ENCODE measurements at regions of chr7 and their contacts with region 1.

Region 1: GRCh38 chr7:151925446-151926335 is 30.6 kb upstream of the GALNTL5 start:
- DNase-seq: no peak
- ATAC-seq: no peak
- H3K4me3 ChIP-seq: no peak overlapping the region
- H3K27ac ChIP-seq: no peak overlapping the region; a peak in 1 of 6 replicates
- H3K4me1 ChIP-seq: peaks cover 7% of the 10 kb centered on the region; the same call in 2 of the 3 replicates
- CTCF ChIP-seq: no peak
- EP300 ChIP-seq: no peak
- POLR2A ChIP-seq: no peak
- RAD21 ChIP-seq: no peak

Region 2: GRCh38 chr7:151900986-151901621 is 24.6 kb before region 1 on chr7:
- CTCF ChIA-PET with region 1: no interaction called
- POLR2A ChIA-PET with region 1: no interaction called
- DNase-seq: no peak
- ATAC-seq: no peak
- H3K4me3 ChIP-seq: no peak overlapping the region
- H3K27ac ChIP-seq: no peak overlapping the region
- H3K4me1 ChIP-seq: peaks cover 3% of the 10 kb centered on the region; the same call in 2 of the 3 replicates
- CTCF ChIP-seq: no peak
- EP300 ChIP-seq: no peak
- POLR2A ChIP-seq: no peak
- RAD21 ChIP-seq: no peak

Region 3: DNA sequence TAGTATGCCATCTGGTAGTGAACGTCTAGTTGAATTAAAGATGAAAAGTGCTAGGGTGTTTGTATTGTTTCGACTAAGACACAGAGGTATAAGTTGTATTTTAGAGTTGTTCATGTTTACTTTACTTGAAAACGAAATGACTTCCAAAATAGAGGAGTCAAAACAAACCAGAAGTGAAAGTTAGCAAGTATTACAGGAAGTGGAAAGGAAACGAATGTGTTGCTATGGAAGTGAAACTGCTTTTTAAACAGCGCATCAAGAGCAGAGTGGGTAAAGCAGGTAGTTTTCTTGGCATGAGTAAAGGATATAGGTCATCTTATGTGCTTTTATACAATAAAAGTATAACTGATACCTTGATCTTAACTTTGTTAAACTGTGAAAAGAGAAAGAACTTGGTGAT is 10.5 kb after region 1 on chr7:
- CTCF ChIA-PET with region 1: interaction called, 12 read pairs
- POLR2A ChIA-PET with region 1: no interaction called
- DNase-seq: no peak
- ATAC-seq: no peak
- H3K4me3 ChIP-seq: no peak overlapping the region
- H3K27ac ChIP-seq: no peak overlapping the region
- H3K4me1 ChIP-seq: peaks cover 22% of the 10 kb centered on the region
- CTCF ChIP-seq: no peak
- EP300 ChIP-seq: no peak
- POLR2A ChIP-seq: no peak
- RAD21 ChIP-seq: no peak